ENCODE measurements at regions of chr9 and their contacts with region 1.

Region 1: GRCh38 chr9:92616655-92617111 is 53.2 kb downstream of the IPPK start:
- DNase-seq: peak in 1 of 2 donors; percentile 61
- ATAC-seq: peak; percentile 63 to 70
- H3K4me3 ChIP-seq: no peak overlapping the region
- H3K27ac ChIP-seq: peak overlapping the region; percentile 51 to 70 (median 58)
- H3K4me1 ChIP-seq: peaks cover 0 to 18% of the 10 kb centered on the region in 2 donors
- H3K27me3 ChIP-seq: no peaks in the 10 kb centered on the region
- CTCF ChIP-seq: no peak
- POLR2A ChIP-seq: peak in 1 of 2 donors; percentile 9

Region 2: GRCh38 chr9:92534674-92535073 is 82.0 kb before region 1 on chr9:
- in situ Hi-C with region 1: no loop called
- intact Hi-C with region 1: loop called (anchors 5 kb)
- DNase-seq: no peak
- ATAC-seq: no peak
- H3K4me3 ChIP-seq: peak overlapping the region in 3 of 4 donors; percentile 21 to 41 (median 36)
- H3K27ac ChIP-seq: peak overlapping the region in 3 of 4 donors; percentile 15 to 51 (median 31)
- H3K4me1 ChIP-seq: no peaks in the 10 kb centered on the region
- H3K27me3 ChIP-seq: no peaks in the 10 kb centered on the region
- CTCF ChIP-seq: no peak
- POLR2A ChIP-seq: no peak

Region 3: DNA sequence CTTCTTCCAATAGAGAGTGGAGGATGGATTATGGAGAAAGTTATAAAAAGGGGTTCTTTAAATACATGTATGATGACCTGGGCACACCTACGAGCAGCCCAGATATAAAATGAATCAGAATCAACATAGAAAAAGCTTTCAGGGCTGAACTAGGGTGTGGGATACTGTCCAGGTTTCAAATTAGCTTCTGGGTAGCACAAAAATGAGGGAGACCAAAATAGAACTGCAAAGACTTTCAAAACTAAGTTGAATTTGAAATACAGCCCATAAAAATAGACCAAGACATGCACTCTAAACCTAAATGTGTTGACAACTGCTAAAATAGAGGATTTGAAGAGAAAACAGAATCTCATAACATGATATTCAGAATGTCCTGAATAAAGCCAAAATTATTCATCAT is 244.2 kb after region 1 on chr9:
- in situ Hi-C with region 1: no loop called
- intact Hi-C with region 1: no loop called
- DNase-seq: no peak
- ATAC-seq: no peak
- H3K4me3 ChIP-seq: no peak overlapping the region
- H3K27ac ChIP-seq: no peak overlapping the region
- H3K4me1 ChIP-seq: no peaks in the 10 kb centered on the region
- H3K27me3 ChIP-seq: no peaks in the 10 kb centered on the region
- CTCF ChIP-seq: no peak
- POLR2A ChIP-seq: no peak

Region 4: DNA sequence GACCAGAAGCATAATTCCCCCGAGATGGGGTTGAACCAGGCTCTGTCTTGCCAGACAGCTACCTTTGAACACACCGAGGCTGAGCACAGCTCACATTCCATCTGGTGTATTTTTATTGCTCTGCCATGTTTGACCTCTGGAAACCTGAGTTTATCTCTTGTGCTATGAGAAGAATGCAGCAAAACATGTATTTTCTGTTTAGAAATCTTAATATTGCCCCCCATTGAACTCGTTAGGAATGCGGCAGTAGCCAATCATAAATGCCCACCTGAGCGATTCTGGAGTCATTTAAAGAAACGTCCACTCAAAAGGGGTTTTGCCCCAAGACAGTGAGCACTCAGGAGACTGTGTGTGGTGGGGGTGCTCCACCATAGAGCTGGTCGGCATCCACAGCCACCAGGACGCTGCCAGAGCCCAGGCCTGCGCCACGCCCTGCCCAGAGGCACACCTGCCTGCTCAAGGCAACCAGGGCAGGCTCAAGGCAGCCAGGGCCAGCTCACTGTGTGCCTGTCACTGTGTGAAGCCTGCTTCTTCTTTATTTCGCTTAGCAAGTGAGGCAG is 357.5 kb after region 1 on chr9:
- in situ Hi-C with region 1: no loop called
- intact Hi-C with region 1: no loop called
- DNase-seq: no peak
- ATAC-seq: no peak
- H3K4me3 ChIP-seq: no peak overlapping the region
- H3K27ac ChIP-seq: no peak overlapping the region
- H3K4me1 ChIP-seq: no peaks in the 10 kb centered on the region
- H3K27me3 ChIP-seq: no peaks in the 10 kb centered on the region
- CTCF ChIP-seq: no peak
- POLR2A ChIP-seq: no peak

Measured in gastrocnemius medialis (tissue), 4 donors.